HCT116 (cell line): ENCODE measurements at regions of chr6 and their contacts with region 1.

Region 1: GRCh38 chr6:151390276-151391032 is 905 bp downstream of the ZBTB2 start:
- DNase-seq: peak; percentile 96
- ATAC-seq: peak; percentile 89
- H3K4me3 ChIP-seq: peak overlapping the region; percentile 82 to 86
- H3K27ac ChIP-seq: peak overlapping the region; percentile 99
- H3K4me1 ChIP-seq: peaks cover 24 to 36% of the 10 kb centered on the region in 2 experiments
- H3K27me3 ChIP-seq: no peaks in the 10 kb centered on the region
- CTCF ChIP-seq: no peak
- POLR2A ChIP-seq: no peak
- RAD21 ChIP-seq: no peak

Region 2: DNA sequence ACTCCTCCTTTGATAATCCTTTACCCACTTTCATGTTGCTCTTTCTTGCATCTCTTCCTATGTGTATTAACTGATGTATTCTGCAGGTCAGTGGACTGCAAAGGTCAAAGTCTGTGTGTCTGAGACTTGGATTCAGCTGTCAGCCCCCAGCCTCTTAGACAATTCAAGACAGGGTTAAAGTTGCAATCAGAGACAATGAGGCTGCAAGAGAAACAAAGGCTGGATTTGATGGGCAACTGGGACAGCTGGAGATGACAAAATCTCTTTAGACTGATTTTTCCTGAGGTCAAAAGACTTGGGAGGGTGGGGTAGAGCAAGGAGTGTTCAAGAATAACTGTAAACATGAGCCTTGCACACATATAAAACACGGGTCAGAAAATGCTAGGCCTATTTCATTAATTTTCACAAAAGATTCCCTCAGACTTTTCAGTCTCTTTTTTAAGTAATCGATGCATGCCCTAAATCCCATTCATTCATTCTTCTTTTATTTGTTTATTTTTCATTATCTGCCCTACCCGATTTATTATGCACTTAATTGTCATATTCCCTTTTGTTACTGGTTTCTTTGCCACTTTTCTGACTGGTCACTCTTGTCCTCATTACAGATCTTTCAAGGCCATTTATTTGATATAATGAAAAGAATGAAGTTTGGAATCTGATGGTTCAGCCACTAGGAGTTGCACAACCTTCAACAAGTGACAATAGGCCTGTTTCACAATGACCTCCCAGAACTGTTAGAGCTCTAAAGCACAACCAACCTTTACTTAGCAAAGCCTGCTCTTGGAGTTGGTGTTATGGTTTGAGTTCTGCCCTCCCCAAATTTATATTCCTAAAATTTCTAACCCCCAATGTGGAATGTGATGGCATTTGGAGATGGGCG is 184.5 kb before region 1 on chr6:
- CTCF ChIA-PET with region 1: no interaction called
- POLR2A ChIA-PET with region 1: no interaction called
- RAD21 ChIA-PET with region 1: no interaction called
- intact Hi-C with region 1: no loop called
- DNase-seq: no peak
- ATAC-seq: no peak
- H3K4me3 ChIP-seq: no peak overlapping the region
- H3K27ac ChIP-seq: no peak overlapping the region
- H3K4me1 ChIP-seq: peaks cover 9 to 32% of the 10 kb centered on the region in 2 experiments
- H3K27me3 ChIP-seq: no peaks in the 10 kb centered on the region
- CTCF ChIP-seq: no peak
- POLR2A ChIP-seq: no peak
- RAD21 ChIP-seq: no peak

Region 3: DNA sequence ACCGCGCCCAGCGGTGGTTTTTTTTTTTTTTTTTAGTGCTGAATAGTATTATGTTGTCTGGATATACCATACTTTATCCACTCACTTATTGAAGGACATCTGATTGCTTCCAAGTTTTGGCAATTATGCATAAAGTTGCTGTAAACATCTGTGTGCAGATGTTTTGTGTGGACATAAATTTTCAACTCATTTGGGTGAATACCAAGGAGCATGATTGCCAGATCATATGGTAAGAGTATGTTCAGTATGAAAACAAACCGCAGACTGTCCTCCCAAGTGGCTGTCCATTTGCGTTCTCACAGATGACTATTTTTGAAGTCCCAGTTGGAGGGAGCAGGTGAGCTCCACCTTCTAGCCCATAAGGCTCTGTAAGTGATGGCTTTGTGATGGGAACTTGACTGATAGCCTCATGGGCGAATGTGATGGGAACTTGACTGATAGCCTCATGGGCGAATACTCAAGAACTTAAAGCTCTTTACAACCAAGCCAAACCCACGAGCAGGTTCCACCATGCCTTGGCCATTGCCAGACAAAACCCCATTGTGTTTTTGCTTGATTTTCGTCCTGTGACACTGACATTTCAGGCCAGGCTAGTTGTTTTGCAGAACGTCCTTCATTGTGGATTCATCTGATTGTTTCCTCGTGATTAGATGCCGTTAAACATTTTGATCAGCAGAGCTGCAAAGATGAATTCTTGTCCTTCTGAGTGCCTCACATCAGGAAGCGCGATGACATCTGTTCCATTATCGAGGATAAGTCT is 50.1 kb before region 1 on chr6:
- CTCF ChIA-PET with region 1: no interaction called
- POLR2A ChIA-PET with region 1: no interaction called
- RAD21 ChIA-PET with region 1: no interaction called
- intact Hi-C with region 1: loop called (anchors 2 kb)
- DNase-seq: no peak
- ATAC-seq: no peak
- H3K4me3 ChIP-seq: no peak overlapping the region
- H3K27ac ChIP-seq: no peak overlapping the region
- H3K4me1 ChIP-seq: peaks cover 0 to 21% of the 10 kb centered on the region in 2 experiments; a peak in 2 of 4 replicates
- H3K27me3 ChIP-seq: no peaks in the 10 kb centered on the region
- CTCF ChIP-seq: no peak
- POLR2A ChIP-seq: no peak
- RAD21 ChIP-seq: no peak

Region 4: GRCh38 chr6:151451950-151452749 is 61.7 kb after region 1 on chr6 and contains the start of gene RMND1:
- CTCF ChIA-PET with region 1: no interaction called
- POLR2A ChIA-PET with region 1: no interaction called
- RAD21 ChIA-PET with region 1: no interaction called
- intact Hi-C with region 1: loop called (anchors 2 kb)
- DNase-seq: peak; percentile 100
- ATAC-seq: peak; percentile 98
- H3K4me3 ChIP-seq: peak within 1 kb of the TSS; percentile 69 to 84
- H3K27ac ChIP-seq: peak within 1 kb of the TSS; percentile 77
- H3K4me1 ChIP-seq: peaks cover 0 to 10% of the 10 kb centered on the region in 2 experiments; a peak in 2 of 4 replicates
- H3K27me3 ChIP-seq: no peaks in the 10 kb centered on the region
- CTCF ChIP-seq: no peak
- POLR2A ChIP-seq: peak; percentile 75
- RAD21 ChIP-seq: no peak
- total RNA-seq, gene RMND1: 28.0 TPM